ENCODE measurements at regions of chr12 and their contacts with region 1.

Region 1: GRCh38 chr12:116759783-116760621 is 21.9 kb downstream of the RNFT2 start:
- DNase-seq: peak; percentile 77
- ATAC-seq: peak; percentile 98
- H3K4me3 Mint-ChIP-seq: peak overlapping the region; percentile 51
- H3K27ac Mint-ChIP-seq: peak overlapping the region; percentile 69
- H3K4me1 Mint-ChIP-seq: peaks cover 8% of the 10 kb centered on the region
- H3K27me3 Mint-ChIP-seq: no peaks in the 10 kb centered on the region
- CTCF ChIP-seq: no peak; the same call in 1 of the 2 replicates

Region 2: GRCh38 chr12:116771651-116772050 is 11.6 kb after region 1 on chr12:
- CTCF ChIA-PET with region 1: interaction called, 6 read pairs
- POLR2A ChIA-PET with region 1: interaction called, 12 read pairs
- DNase-seq: no peak
- ATAC-seq: no peak
- H3K4me3 Mint-ChIP-seq: no peak overlapping the region
- H3K27ac Mint-ChIP-seq: no peak overlapping the region
- H3K4me1 Mint-ChIP-seq: no peaks in the 10 kb centered on the region
- H3K27me3 Mint-ChIP-seq: no peaks in the 10 kb centered on the region
- CTCF ChIP-seq: no peak